ENCODE measurements at regions of chr9 and their contacts with region 1.

Region 1: DNA sequence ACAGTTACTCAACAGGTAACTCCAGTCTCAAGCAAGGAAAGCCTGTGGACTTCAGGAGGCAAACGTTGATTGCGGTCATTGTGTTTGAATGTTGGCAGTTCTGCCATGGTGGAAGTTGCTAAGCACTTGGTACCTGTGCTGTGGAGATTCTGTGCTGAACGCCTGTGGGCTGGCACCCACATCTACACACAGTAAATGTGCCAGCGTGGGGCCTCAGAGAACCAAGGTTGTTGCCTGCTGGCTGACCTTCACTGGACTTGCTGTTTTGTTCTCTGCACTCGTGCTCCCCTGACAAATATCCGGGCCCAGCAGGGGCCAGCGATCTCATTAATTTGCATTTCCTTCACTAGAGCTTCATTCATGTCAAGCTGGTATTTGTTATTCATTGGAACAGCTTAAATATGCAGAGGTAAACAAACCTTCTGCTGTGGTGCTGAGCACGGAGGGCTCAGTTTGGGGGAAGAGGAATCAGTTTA is 141.8 kb downstream of the PRKACG start:
- DNase-seq: no peak
- ATAC-seq: no peak
- H3K4me3 Mint-ChIP-seq: no peak overlapping the region
- H3K27ac Mint-ChIP-seq: no peak overlapping the region
- H3K4me1 Mint-ChIP-seq: no peaks in the 10 kb centered on the region
- H3K27me3 Mint-ChIP-seq: no peaks in the 10 kb centered on the region

Region 2: DNA sequence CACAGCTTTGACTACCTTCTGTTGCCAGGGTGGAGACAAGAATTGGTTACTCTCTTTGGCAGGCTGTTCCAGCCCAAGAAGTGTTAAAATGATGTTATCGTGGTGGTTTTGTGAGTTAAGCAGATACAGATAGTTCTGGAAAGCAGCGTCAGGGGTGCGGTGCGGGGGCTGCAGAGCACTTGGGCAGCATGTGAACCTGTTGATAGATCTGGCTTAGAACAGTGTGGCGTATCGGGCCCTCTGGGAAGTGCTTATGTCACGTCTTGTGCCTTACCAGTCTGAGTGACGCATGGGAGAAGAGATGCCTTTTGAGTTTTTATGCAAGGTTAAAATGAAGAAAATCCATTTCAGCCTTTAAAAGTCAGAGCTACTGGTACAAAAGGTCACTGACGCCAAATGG is 10.6 kb before region 1 on chr9:
- CTCF ChIA-PET with region 1: no interaction called
- POLR2A ChIA-PET with region 1: no interaction called
- intact Hi-C with region 1: loop called in 1 of 2 experiments (anchors 2 kb)
- DNase-seq: no peak
- ATAC-seq: no peak
- H3K4me3 Mint-ChIP-seq: no peak overlapping the region
- H3K27ac Mint-ChIP-seq: no peak overlapping the region
- H3K4me1 Mint-ChIP-seq: no peaks in the 10 kb centered on the region
- H3K27me3 Mint-ChIP-seq: peaks cover 6% of the 10 kb centered on the region

Region 3: GRCh38 chr9:68905129-68905528 is 33.1 kb after region 1 on chr9:
- CTCF ChIA-PET with region 1: no interaction called
- POLR2A ChIA-PET with region 1: no interaction called
- intact Hi-C with region 1: loop called in 1 of 2 experiments (anchors 5 kb)
- DNase-seq: no peak
- ATAC-seq: no peak
- H3K4me3 Mint-ChIP-seq: no peak overlapping the region
- H3K27ac Mint-ChIP-seq: peak overlapping the region; percentile 29
- H3K4me1 Mint-ChIP-seq: peaks cover 4% of the 10 kb centered on the region
- H3K27me3 Mint-ChIP-seq: peaks cover 4% of the 10 kb centered on the region